ENCODE measurements at regions of chr17 and their contacts with region 1.

Region 1: GRCh38 chr17:9361188-9361955 is 214.2 kb downstream of the STX8 start:
- DNase-seq: no peak
- H3K4me3 ChIP-seq: no peak overlapping the region
- H3K4me3 Mint-ChIP-seq: no peak overlapping the region
- H3K27ac ChIP-seq: no peak overlapping the region
- H3K27ac Mint-ChIP-seq: peak overlapping the region in 1 of 7 donors; percentile 35
- H3K4me1 ChIP-seq: peaks cover 11% of the 10 kb centered on the region in 2 donors
- H3K4me1 Mint-ChIP-seq: peaks cover 12% of the 10 kb centered on the region
- H3K27me3 ChIP-seq: no peaks in the 10 kb centered on the region
- H3K27me3 Mint-ChIP-seq: peaks cover 0 to 3% (median 1%) of the 10 kb centered on the region in 3 donors
- CTCF ChIP-seq: no peak

Region 2: DNA sequence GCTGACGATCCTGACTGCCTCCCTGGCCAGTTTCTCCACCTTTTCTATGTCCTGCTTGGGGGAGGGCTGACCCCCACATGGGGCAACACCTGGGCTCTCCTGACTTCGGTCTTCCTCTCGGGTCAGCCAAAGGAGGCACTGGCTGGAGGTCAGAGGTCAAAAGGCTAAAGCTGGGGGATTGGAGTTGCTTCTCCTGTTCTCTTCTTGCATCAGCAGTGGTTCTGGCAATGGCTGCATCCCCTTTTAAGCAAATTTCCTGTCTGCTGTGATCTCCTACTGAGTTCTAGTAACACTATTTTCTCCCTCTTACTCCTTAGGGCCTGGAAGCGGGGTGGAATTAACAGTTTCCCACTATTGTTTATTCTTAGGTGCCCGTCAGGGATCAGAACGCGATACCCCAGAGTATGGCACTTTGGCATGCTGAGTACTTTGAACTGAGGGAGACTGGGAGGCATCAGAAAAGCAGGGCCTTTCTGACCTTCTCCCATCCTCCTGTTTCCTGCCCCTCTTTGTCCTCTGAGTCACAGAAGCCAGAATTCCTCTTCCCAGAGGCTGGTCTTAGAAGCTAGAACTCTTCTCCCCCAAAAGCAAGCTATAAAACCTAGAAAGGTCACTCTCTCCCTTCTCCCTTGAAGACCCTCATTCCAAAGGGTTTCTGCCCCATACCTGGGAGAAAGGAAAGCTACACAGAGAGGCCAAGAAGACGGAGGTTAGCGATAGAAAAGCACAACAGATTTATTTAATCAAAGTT is 53.9 kb before region 1 on chr17:
- intact Hi-C with region 1: loop called in 1 of 2 experiments (anchors 10 kb)
- DNase-seq: no peak
- H3K4me3 ChIP-seq: no peak overlapping the region
- H3K4me3 Mint-ChIP-seq: no peak overlapping the region
- H3K27ac ChIP-seq: no peak overlapping the region
- H3K27ac Mint-ChIP-seq: peak overlapping the region in 2 of 7 donors; percentile 24 to 42
- H3K4me1 ChIP-seq: no peaks in the 10 kb centered on the region
- H3K4me1 Mint-ChIP-seq: no peaks in the 10 kb centered on the region
- H3K27me3 ChIP-seq: no peaks in the 10 kb centered on the region
- H3K27me3 Mint-ChIP-seq: peaks cover 0 to 2% (median 1%) of the 10 kb centered on the region in 3 donors
- CTCF ChIP-seq: no peak

Region 3: GRCh38 chr17:9432934-9433421 is 71.6 kb after region 1 on chr17:
- intact Hi-C with region 1: no loop called
- DNase-seq: no peak
- H3K4me3 ChIP-seq: no peak overlapping the region
- H3K4me3 Mint-ChIP-seq: no peak overlapping the region
- H3K27ac ChIP-seq: no peak overlapping the region
- H3K27ac Mint-ChIP-seq: no peak overlapping the region
- H3K4me1 ChIP-seq: no peaks in the 10 kb centered on the region
- H3K4me1 Mint-ChIP-seq: no peaks in the 10 kb centered on the region
- H3K27me3 ChIP-seq: no peaks in the 10 kb centered on the region
- H3K27me3 Mint-ChIP-seq: no peaks in the 10 kb centered on the region
- CTCF ChIP-seq: no peak

Measured in CD14-positive monocyte (primary cell).